Activated T-helper 2 cell treated with anti-CD3 and anti-CD28 coated beads, Interferon-gamma antibody, Interleukin-2, Interleukin-4, amounts not matched to agents 10 μg/mL and 5 μg/mL and 100 μg/mL, durations not matched to agents 14 hours and 24 hours and 36 hours (primary cell): ENCODE measurements at regions of chr12 and their contacts with region 1.

Region 1: DNA sequence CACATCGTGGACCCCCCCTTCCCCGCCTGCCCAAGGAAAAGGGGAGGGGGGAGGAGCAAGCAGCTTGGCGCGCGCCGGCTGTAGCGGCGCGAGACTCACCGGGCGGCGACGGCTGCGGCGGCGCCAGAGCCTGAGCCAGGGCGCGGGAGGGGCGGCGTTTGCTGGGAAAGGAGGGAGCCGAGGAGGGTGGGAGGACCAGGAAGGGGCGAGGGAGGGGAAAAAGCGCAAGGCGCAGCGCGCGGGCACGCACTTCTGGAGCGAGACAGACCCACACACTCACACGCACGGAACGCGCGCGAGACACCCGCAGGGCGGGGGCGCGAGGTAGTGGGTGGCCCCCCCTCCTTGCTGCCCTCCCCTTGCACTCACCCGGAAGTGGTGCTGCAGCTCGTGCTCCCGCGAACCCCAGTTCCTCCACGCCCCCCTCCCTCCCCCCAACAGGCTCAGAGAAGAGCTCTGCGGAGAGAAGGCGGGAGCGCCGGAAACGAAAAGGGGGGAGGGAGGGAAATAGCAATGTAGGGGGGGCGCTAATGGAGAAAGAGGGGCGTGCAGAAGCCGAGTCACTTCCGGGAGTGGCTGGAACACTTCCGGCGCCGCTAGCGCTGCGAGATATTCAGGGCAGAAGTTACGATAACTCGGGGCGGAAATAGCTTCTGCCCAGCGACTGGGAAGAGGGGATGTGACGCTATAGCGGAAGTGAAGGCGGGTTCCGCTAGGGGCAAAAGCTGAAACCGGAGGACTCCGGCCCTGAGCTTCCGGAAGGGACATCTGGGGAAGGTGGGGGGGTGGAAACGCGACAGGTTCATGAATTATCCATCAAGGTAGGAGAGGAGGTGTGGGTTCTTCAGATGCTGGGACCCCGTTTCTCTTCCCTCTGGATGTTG is at the start of gene ZNF384:
- DNase-seq: peak; percentile 95
- H3K4me3 Mint-ChIP-seq: peak within 1 kb of the TSS; percentile 96
- H3K27ac Mint-ChIP-seq: peak within 1 kb of the TSS; percentile 92
- H3K4me1 Mint-ChIP-seq: peaks cover 35% of the 10 kb centered on the region
- H3K27me3 Mint-ChIP-seq: no peaks in the 10 kb centered on the region
- total RNA-seq, gene ZNF384: 73.7 and 75.4 TPM in 2 replicates

Region 2: GRCh38 chr12:6554168-6555017 is 134.8 kb before region 1 on chr12:
- intact Hi-C with region 1: no loop called
- DNase-seq: peak; percentile 51
- H3K4me3 Mint-ChIP-seq: peak overlapping the region; percentile 90
- H3K27ac Mint-ChIP-seq: peak overlapping the region; percentile 17
- H3K4me1 Mint-ChIP-seq: peaks cover 32% of the 10 kb centered on the region
- H3K27me3 Mint-ChIP-seq: no peaks in the 10 kb centered on the region

Region 3: GRCh38 chr12:6567112-6567670 is 122.0 kb before region 1 on chr12:
- intact Hi-C with region 1: loop called (anchors 5 kb)
- DNase-seq: no peak
- H3K4me3 Mint-ChIP-seq: peak overlapping the region; percentile 100
- H3K27ac Mint-ChIP-seq: peak overlapping the region; percentile 97
- H3K4me1 Mint-ChIP-seq: peaks cover 28% of the 10 kb centered on the region
- H3K27me3 Mint-ChIP-seq: no peaks in the 10 kb centered on the region

Region 4: DNA sequence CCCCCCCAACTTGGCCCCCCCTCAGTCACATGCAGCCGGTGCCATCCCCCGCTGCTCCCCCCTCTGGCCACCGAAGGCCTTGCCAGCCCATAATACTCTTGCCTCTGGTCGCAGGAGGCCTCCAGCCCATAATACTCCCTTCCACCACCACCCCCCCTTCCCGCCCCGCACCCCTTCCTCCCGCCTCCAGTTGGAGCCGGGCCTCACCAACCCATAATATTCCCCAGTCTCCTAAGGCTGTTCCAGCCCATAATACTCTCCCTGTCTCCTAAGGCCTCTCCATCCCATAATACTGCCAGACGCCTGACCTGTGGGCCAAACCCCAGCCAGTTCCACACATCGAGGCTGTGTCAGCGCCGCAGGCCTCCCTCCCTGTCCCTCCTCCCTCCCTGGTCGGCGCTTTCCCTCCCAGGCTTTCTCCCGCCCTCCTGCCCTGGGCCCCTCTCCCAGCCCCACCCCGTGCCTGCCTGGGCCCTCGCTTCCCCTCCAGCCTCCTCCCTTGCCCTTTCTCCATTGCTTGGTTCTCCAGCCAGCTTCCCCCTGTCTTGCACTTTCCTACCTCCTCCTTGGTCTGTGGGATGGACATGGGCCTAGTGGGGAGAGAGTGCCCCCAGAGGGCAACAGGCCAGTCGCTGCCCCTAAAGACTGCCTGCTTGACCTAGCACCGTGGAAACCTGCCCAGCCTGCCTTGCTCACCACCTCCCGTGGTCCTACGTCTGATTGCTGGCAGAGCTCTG is 75.3 kb before region 1 on chr12:
- intact Hi-C with region 1: loop called (anchors 1 kb)
- DNase-seq: no peak
- H3K4me3 Mint-ChIP-seq: no peak overlapping the region
- H3K27ac Mint-ChIP-seq: peak overlapping the region; percentile 58
- H3K4me1 Mint-ChIP-seq: peaks cover 29% of the 10 kb centered on the region
- H3K27me3 Mint-ChIP-seq: no peaks in the 10 kb centered on the region

Region 5: GRCh38 chr12:6723607-6724396 is 34.6 kb after region 1 on chr12 and contains the start of gene COPS7A:
- intact Hi-C with region 1: loop called (anchors 1 kb)
- DNase-seq: peak; percentile 98
- H3K4me3 Mint-ChIP-seq: peak within 1 kb of the TSS; percentile 99
- H3K27ac Mint-ChIP-seq: peak within 1 kb of the TSS; percentile 98
- H3K4me1 Mint-ChIP-seq: peaks cover 17% of the 10 kb centered on the region
- H3K27me3 Mint-ChIP-seq: no peaks in the 10 kb centered on the region
- total RNA-seq, gene COPS7A: 33.0 and 35.6 TPM in 2 replicates

Region 6: GRCh38 chr12:6792522-6793201 is 103.4 kb after region 1 on chr12:
- intact Hi-C with region 1: loop called (anchors 5 kb)
- DNase-seq: peak; percentile 49
- H3K4me3 Mint-ChIP-seq: peak overlapping the region; percentile 99
- H3K27ac Mint-ChIP-seq: peak overlapping the region; percentile 95
- H3K4me1 Mint-ChIP-seq: peaks cover 53% of the 10 kb centered on the region
- H3K27me3 Mint-ChIP-seq: no peaks in the 10 kb centered on the region